IMR-90 (cell line): ENCODE measurements at regions of chr20 and their contacts with region 1.

Region 1: GRCh38 chr20:50987592-50988210 is 29.1 kb downstream of the MOCS3 start:
- DNase-seq: peak; percentile 90
- ATAC-seq: peak; percentile 99
- H3K4me3 ChIP-seq: no peak overlapping the region
- H3K27ac ChIP-seq: no peak overlapping the region
- H3K4me1 ChIP-seq: peaks cover 3% of the 10 kb centered on the region
- H3K27me3 ChIP-seq: no peaks in the 10 kb centered on the region
- CTCF ChIP-seq: peak; percentile 96
- POLR2A ChIP-seq: peak; percentile 53; the same call in 1 of the 2 replicates
- RAD21 ChIP-seq: peak; percentile 97

Region 2: DNA sequence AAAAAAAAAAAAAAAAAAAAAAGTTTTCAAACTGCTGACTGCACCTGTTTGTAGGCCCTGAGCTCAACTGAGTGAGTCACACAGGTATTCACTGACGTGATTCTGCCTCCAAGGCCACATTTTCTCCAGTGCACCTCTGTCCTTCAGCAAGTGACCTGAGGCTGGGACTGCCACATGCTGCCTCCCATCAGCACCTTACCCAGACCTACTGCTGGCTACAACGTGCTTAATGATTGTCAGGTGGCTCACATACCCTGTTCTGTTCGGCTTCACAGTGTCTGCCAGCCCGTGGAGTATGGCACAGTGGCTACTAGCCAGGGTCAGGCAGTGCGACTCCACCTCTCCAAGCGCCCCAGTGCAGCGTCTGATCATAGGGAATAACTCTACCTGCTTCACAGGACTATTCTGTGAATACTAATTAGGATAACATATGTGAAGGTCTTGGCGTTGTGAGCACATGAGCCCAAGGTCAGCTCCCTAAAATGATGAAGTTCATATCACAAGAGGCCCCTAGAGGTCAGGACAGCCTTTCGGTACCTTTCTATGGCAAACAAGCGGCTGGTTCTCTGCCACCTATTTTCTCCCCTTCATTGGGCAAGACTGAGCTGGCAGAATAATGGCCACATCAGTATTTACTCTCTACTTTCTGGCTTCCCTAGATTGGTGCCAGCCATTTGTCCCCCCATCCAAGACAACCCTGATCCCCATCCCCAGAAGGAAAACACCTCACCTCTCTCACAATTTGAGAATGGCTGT is 324.4 kb before region 1 on chr20:
- CTCF ChIA-PET with region 1: no interaction called
- POLR2A ChIA-PET with region 1: no interaction called
- dilution Hi-C with region 1: no loop called
- in situ Hi-C with region 1: no loop called
- intact Hi-C with region 1: no loop called
- DNase-seq: no peak
- ATAC-seq: no peak
- H3K4me3 ChIP-seq: no peak overlapping the region
- H3K27ac ChIP-seq: no peak overlapping the region
- H3K4me1 ChIP-seq: peaks cover 9% of the 10 kb centered on the region
- H3K27me3 ChIP-seq: no peaks in the 10 kb centered on the region
- CTCF ChIP-seq: no peak
- POLR2A ChIP-seq: no peak
- RAD21 ChIP-seq: no peak

Region 3: DNA sequence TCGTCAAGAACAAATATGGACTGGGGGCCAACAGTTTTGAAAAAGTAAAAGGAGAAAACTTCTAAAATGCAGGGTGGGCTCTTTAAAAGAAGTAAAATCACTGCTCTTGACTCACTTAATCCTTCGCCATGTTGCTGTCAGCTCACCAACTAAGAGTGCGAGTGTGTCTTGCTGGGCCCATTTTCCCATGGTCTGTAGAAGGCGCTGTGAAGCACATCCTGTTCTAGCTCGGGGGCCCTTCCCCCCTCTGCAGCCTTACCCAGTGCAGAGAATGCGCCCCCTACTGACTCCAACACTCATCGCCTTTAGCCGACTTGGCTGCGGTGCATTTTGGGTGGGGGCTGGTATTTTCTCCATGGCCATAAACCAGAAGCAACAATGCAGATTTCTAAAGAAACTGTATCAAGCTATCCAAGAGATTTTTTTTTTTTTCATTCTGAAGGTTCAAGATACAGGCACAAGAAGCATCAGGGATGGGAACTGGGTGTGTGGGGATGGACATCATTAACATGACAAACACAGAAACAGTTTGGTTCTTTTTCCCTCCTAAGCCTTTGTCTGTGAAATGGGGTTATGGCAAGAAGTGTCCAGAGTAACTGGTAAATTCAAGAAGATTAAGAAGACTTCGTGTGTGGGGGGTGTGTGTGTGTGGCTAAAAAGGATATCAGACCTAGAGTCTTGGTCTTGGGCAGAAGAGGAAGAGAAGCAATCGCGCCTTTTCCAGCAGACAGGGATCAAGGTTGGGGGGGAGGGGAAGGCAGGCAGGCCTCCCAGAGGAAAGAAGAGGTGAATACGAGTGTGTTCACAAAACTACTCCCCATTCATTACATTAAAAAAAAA is 58.2 kb before region 1 on chr20:
- CTCF ChIA-PET with region 1: no interaction called
- POLR2A ChIA-PET with region 1: interaction called, 17 read pairs
- dilution Hi-C with region 1: no loop called
- in situ Hi-C with region 1: no loop called
- intact Hi-C with region 1: no loop called
- DNase-seq: peak; percentile 97
- ATAC-seq: peak; percentile 56
- H3K4me3 ChIP-seq: peak overlapping the region; percentile 95
- H3K27ac ChIP-seq: peak overlapping the region; percentile 94
- H3K4me1 ChIP-seq: peaks cover 18% of the 10 kb centered on the region
- H3K27me3 ChIP-seq: no peaks in the 10 kb centered on the region
- CTCF ChIP-seq: peak; percentile 99
- POLR2A ChIP-seq: peak; percentile 25; the same call in 1 of the 2 replicates
- RAD21 ChIP-seq: peak; percentile 81

Region 4: GRCh38 chr20:51111290-51111689 is 123.6 kb after region 1 on chr20:
- CTCF ChIA-PET with region 1: no interaction called
- POLR2A ChIA-PET with region 1: no interaction called
- dilution Hi-C with region 1: no loop called
- in situ Hi-C with region 1: no loop called
- intact Hi-C with region 1: no loop called
- DNase-seq: no peak
- ATAC-seq: no peak
- H3K4me3 ChIP-seq: no peak overlapping the region
- H3K27ac ChIP-seq: no peak overlapping the region
- H3K4me1 ChIP-seq: no peaks in the 10 kb centered on the region
- H3K27me3 ChIP-seq: peaks cover 45% of the 10 kb centered on the region
- CTCF ChIP-seq: no peak
- POLR2A ChIP-seq: no peak
- RAD21 ChIP-seq: no peak

Region 5: DNA sequence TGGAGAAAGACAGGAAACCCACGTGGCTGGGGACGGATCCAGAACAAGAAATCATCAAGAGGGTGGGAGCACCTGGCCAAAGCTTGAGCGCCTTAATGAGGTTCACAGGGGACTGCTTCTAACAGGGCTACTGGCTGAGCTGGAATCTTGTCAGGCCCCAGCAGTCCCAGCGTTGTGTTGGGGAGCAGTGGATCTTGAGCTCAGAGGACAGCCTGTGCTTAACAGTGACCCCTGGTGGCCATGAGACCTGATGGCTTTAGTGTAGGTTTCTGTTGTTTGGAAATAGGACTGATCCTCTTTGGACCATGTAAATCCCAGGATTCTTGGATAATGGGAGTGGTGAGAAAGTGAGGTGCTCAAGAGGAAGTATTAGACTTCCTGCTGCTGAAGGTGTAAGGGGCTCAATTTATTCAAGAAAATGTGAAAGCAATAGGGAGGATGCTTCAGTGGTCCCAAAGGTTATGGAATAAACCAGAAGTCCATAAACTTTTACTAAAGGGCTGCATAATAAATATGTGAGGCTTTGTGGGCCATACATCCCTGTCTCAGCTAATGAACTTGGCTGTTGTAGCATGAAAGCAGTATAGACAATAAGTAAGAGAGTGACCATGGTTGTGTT is 338.6 kb after region 1 on chr20:
- CTCF ChIA-PET with region 1: interaction called, 14 read pairs
- POLR2A ChIA-PET with region 1: no interaction called
- dilution Hi-C with region 1: no loop called
- in situ Hi-C with region 1: no loop called
- intact Hi-C with region 1: no loop called
- DNase-seq: peak; percentile 76
- ATAC-seq: 0 out of 2 replicates have a peak, but pooled peaks have one; percentile 16
- H3K4me3 ChIP-seq: no peak overlapping the region
- H3K27ac ChIP-seq: no peak overlapping the region; the same call in 1 of the 2 replicates
- H3K4me1 ChIP-seq: peaks cover 18% of the 10 kb centered on the region
- H3K27me3 ChIP-seq: no peaks in the 10 kb centered on the region
- CTCF ChIP-seq: peak; percentile 63
- POLR2A ChIP-seq: peak; percentile 85; the same call in 1 of the 2 replicates
- RAD21 ChIP-seq: peak; percentile 48

Region 6: DNA sequence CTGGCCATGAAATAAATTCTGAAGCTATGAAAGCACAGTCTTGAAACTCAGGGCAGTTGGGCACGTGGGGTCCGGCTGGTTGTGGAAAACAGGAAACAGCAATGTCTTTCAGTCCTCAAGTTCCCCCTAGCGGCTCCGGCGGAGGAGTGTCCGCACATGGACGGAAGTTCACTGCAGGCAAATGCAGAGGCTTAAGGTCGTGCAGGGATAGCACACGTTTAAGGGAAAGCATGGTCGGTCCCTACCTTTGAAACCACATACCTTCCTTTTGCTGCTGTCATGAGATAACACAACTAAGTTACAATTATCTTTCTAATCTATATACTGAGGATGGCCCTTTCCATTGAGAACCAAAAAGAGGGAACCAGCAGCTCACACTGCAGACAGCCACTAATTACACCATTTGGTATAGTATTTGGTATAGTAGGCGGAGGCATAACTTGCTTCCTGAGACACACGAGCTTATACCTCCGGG is 607.4 kb after region 1 on chr20:
- CTCF ChIA-PET with region 1: interaction called, 5 read pairs
- POLR2A ChIA-PET with region 1: no interaction called
- dilution Hi-C with region 1: no loop called
- in situ Hi-C with region 1: loop called (anchors 10 kb)
- intact Hi-C with region 1: loop called (anchors 1 kb)
- DNase-seq: peak; percentile 89
- ATAC-seq: peak; percentile 100
- H3K4me3 ChIP-seq: no peak overlapping the region
- H3K27ac ChIP-seq: no peak overlapping the region
- H3K4me1 ChIP-seq: no peaks in the 10 kb centered on the region
- H3K27me3 ChIP-seq: no peaks in the 10 kb centered on the region
- CTCF ChIP-seq: peak; percentile 95
- POLR2A ChIP-seq: peak; percentile 36; the same call in 1 of the 2 replicates
- RAD21 ChIP-seq: peak; percentile 98

Region 7: GRCh38 chr20:51767010-51767558 is 779.4 kb after region 1 on chr20:
- CTCF ChIA-PET with region 1: no interaction called
- POLR2A ChIA-PET with region 1: no interaction called
- dilution Hi-C with region 1: no loop called
- in situ Hi-C with region 1: loop called (anchors 25 kb)
- intact Hi-C with region 1: no loop called
- DNase-seq: no peak
- ATAC-seq: peak; percentile 39
- H3K4me3 ChIP-seq: peak overlapping the region; percentile 76
- H3K27ac ChIP-seq: no peak overlapping the region
- H3K4me1 ChIP-seq: no peaks in the 10 kb centered on the region
- H3K27me3 ChIP-seq: no peaks in the 10 kb centered on the region
- CTCF ChIP-seq: no peak
- POLR2A ChIP-seq: no peak
- RAD21 ChIP-seq: no peak